Mammary epithelial cell (primary cell): ENCODE measurements at regions of chr11 and their contacts with region 1.

Region 1: DNA sequence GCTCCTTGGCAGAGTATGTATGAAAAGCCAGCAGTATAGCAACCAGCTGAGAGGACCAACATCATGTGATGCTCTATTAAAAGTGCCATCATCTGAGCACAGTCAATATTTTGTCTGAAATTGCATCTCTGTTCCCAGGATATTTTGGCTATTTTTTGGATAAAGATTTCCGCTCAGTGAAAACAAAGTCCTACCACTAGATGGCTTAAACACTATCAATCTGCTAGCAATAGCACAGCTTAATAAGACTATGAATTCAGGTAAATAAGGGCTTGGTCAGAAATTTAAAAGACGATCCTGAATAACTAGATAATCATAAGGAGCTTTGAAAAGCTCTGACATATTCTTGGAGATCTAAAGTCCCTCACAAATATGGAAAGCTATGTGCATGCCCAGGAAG is 74.4 kb downstream of the MS4A13 start:
- DNase-seq: no peak
- H3K4me3 ChIP-seq: no peak overlapping the region
- H3K27ac ChIP-seq: no peak overlapping the region
- H3K4me1 ChIP-seq: no peaks in the 10 kb centered on the region
- H3K27me3 ChIP-seq: no peaks in the 10 kb centered on the region
- CTCF ChIP-seq: peak; percentile 30 to 37

Region 2: GRCh38 chr11:60221181-60221580 is 368.4 kb before region 1 on chr11:
- CTCF ChIA-PET with region 1: no interaction called
- dilution Hi-C with region 1: no loop called
- in situ Hi-C with region 1: no loop called
- intact Hi-C with region 1: no loop called
- DNase-seq: no peak
- H3K4me3 ChIP-seq: no peak overlapping the region
- H3K27ac ChIP-seq: no peak overlapping the region
- H3K4me1 ChIP-seq: no peaks in the 10 kb centered on the region
- H3K27me3 ChIP-seq: no peaks in the 10 kb centered on the region
- CTCF ChIP-seq: no peak

Region 3: GRCh38 chr11:60634126-60634525 is 44.5 kb after region 1 on chr11:
- CTCF ChIA-PET with region 1: no interaction called
- dilution Hi-C with region 1: no loop called
- in situ Hi-C with region 1: loop called in 1 of 2 experiments (anchors 5 kb)
- intact Hi-C with region 1: no loop called
- DNase-seq: no peak
- H3K4me3 ChIP-seq: no peak overlapping the region
- H3K27ac ChIP-seq: no peak overlapping the region
- H3K4me1 ChIP-seq: no peaks in the 10 kb centered on the region
- H3K27me3 ChIP-seq: no peaks in the 10 kb centered on the region
- CTCF ChIP-seq: peak; percentile 33 to 37

Region 4: DNA sequence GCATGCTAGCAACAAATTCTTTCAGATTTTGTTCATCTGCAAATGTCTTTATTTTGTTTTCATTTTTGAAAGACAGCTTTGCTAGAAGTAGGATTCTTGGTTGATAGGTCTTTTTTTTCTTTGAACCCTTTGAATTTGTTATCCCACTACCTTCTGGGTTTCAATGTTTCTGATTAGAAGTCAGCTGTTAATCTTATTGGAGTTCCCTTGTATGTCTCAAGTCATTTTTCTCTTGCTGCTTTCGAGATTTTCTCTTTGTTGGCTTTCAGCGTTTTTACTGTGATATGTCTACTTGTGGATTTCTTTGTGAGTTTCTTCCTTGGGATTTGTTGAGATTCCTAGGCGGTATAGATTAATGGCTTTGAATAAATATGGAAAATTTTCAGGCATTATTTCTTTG is 82.6 kb after region 1 on chr11:
- CTCF ChIA-PET with region 1: no interaction called
- dilution Hi-C with region 1: loop called (anchors 5 kb)
- in situ Hi-C with region 1: no loop called
- intact Hi-C with region 1: no loop called
- DNase-seq: no peak
- H3K4me3 ChIP-seq: no peak overlapping the region
- H3K27ac ChIP-seq: no peak overlapping the region
- H3K4me1 ChIP-seq: no peaks in the 10 kb centered on the region
- H3K27me3 ChIP-seq: no peaks in the 10 kb centered on the region
- CTCF ChIP-seq: no peak

Region 5: GRCh38 chr11:60739114-60739513 is 149.5 kb after region 1 on chr11:
- CTCF ChIA-PET with region 1: no interaction called
- dilution Hi-C with region 1: no loop called
- in situ Hi-C with region 1: no loop called
- intact Hi-C with region 1: no loop called
- DNase-seq: no peak
- H3K4me3 ChIP-seq: no peak overlapping the region
- H3K27ac ChIP-seq: no peak overlapping the region
- H3K4me1 ChIP-seq: no peaks in the 10 kb centered on the region
- H3K27me3 ChIP-seq: no peaks in the 10 kb centered on the region
- CTCF ChIP-seq: peak in 1 of 2 donors; percentile 3

Region 6: DNA sequence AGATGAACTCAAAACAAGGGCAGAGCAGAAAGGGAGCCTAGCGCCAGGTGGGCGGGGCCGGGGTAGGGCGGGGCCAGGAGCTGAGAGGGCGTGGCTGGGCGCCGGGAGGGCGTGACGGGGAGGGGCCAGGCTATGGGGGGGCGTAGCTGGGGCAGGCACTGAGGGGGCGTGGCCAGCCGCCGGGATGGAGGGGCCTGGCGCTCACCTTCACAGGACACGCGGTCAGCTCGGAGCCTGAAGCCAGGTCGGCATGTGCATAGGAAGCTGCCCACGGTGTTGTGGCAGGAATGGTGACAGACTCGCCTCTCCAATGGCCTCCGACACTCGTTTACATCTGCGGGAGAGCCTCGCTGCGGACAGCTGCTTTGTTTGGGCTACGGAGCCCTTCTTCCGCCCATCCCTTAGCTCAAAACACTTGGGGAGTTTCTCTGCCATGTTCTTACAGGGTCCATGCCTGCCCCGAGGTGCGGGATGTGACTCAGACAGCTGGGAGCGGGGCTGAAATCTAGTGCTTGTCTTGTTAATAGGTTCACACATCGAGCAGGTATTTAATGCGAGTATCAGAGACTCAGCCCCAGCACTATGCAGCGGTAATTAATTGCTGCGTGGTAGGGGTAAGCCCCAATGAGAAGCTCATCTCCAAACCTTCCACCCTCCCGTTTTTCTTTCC is 692.1 kb after region 1 on chr11:
- CTCF ChIA-PET with region 1: no interaction called
- dilution Hi-C with region 1: no loop called
- in situ Hi-C with region 1: no loop called
- intact Hi-C with region 1: no loop called
- DNase-seq: peak; percentile 22
- H3K4me3 ChIP-seq: peak overlapping the region; percentile 23 to 45 (median 44)
- H3K27ac ChIP-seq: no peak overlapping the region
- H3K4me1 ChIP-seq: peaks cover 29% of the 10 kb centered on the region
- H3K27me3 ChIP-seq: no peaks in the 10 kb centered on the region
- CTCF ChIP-seq: no peak